A549 (cell line): ENCODE measurements at regions of chr17 and their contacts with region 1.

Region 1: DNA sequence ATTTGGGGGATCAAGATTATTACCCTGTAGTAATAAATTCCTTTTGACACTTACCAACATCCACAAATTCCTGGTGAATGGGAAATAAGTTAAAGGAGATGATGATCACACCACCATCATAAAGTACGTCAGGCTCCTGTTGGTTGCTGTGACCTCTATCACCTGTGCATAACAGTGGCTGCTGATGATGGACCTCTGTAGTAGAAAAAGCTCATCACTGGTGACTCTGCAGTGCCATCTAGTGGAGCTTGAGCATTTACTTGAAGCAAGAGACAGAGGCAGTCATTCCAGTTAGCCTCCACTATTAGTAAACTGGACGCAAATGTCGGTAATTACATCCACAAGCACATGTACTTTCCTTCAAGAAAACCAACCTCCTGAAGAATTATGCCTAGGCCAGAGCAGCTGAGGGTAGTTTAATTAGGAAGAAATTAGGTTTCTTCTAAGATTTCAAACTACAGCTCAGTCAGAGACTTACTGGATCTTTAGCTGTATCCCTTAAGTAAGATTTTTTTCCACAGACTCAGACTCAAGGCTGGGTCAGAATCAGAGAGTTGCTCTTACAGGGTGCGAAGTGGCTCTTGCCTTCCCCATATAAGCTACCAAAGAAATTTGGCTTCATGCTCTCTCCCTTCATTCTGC is 39.3 kb downstream of the CYB561 start:
- DNase-seq: peak; percentile 87 to 92
- ATAC-seq: peak; percentile 95 to 97
- H3K4me3 ChIP-seq: no peak overlapping the region
- H3K27ac ChIP-seq: no peak overlapping the region
- H3K4me1 ChIP-seq: no peaks in the 10 kb centered on the region
- CTCF ChIP-seq: peak; percentile 96
- EP300 ChIP-seq: no peak
- POLR2A ChIP-seq: no peak
- RAD21 ChIP-seq: peak; percentile 94 to 96

Region 2: GRCh38 chr17:62703775-62704378 is 702.9 kb before region 1 on chr17:
- CTCF ChIA-PET with region 1: interaction called, 13 read pairs
- POLR2A ChIA-PET with region 1: no interaction called
- DNase-seq: peak; percentile 64 to 74
- ATAC-seq: peak; percentile 86 to 93
- H3K4me3 ChIP-seq: peak overlapping the region; percentile 70
- H3K27ac ChIP-seq: peak overlapping the region; percentile 96 to 97
- H3K4me1 ChIP-seq: peaks cover 21% of the 10 kb centered on the region
- CTCF ChIP-seq: peak; percentile 99
- EP300 ChIP-seq: no peak; a peak in 1 of 5 replicates
- POLR2A ChIP-seq: no peak
- RAD21 ChIP-seq: peak; percentile 94 to 100

Region 3: GRCh38 chr17:62797959-62798358 is 608.9 kb before region 1 on chr17:
- CTCF ChIA-PET with region 1: no interaction called
- POLR2A ChIA-PET with region 1: no interaction called
- DNase-seq: no peak
- ATAC-seq: no peak
- H3K4me3 ChIP-seq: no peak overlapping the region
- H3K27ac ChIP-seq: peak overlapping the region; percentile 41 to 90
- H3K4me1 ChIP-seq: peaks cover 15% of the 10 kb centered on the region
- CTCF ChIP-seq: no peak
- EP300 ChIP-seq: no peak
- POLR2A ChIP-seq: no peak
- RAD21 ChIP-seq: no peak

Region 4: DNA sequence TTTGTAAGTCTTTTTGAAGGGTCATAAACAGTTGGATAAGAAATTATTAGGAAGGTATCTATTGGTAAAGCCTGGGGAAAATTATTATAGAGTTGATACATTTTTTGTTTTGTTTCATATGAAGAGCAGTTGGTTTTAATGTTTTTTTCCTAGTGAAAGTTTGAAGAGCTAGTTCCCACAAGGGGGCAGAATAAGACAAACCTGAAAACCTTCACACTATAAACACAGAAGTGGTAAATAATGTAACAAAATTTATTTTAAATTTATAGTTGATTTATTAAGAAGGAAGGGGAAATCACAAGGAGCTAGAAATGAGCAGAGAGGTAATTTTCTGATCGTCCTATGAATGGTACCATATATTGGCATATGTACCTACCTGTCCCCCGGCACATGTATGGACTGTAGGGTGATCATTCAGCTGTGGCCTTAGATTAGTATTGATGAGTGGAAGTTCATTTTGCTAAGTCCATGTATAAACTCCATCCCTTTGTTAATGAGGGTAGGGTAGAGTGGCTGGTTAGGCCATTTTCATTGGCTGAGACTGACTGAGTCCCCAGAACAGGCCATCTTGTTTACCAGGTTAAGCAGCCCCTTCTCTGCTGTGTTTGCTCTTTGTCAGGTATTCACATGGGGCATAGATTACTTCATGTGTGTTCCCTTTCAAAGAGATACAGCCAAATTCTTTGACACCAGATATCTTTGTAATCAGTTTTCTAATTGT is 324.4 kb before region 1 on chr17:
- CTCF ChIA-PET with region 1: interaction called, 18 read pairs
- POLR2A ChIA-PET with region 1: no interaction called
- DNase-seq: peak in 1 of 2 experiments; percentile 26
- ATAC-seq: peak; percentile 28 to 55; a peak in 3 of 6 replicates
- H3K4me3 ChIP-seq: no peak overlapping the region
- H3K27ac ChIP-seq: no peak overlapping the region
- H3K4me1 ChIP-seq: no peaks in the 10 kb centered on the region
- CTCF ChIP-seq: peak; percentile 64
- EP300 ChIP-seq: no peak
- POLR2A ChIP-seq: no peak
- RAD21 ChIP-seq: peak; percentile 62 to 63

Region 5: GRCh38 chr17:63364387-63364786 is 42.4 kb before region 1 on chr17:
- CTCF ChIA-PET with region 1: interaction called, 17 read pairs
- POLR2A ChIA-PET with region 1: no interaction called
- DNase-seq: no peak
- ATAC-seq: no peak
- H3K4me3 ChIP-seq: no peak overlapping the region
- H3K27ac ChIP-seq: no peak overlapping the region
- H3K4me1 ChIP-seq: no peaks in the 10 kb centered on the region
- CTCF ChIP-seq: no peak
- EP300 ChIP-seq: no peak
- POLR2A ChIP-seq: no peak
- RAD21 ChIP-seq: no peak

Region 6: DNA sequence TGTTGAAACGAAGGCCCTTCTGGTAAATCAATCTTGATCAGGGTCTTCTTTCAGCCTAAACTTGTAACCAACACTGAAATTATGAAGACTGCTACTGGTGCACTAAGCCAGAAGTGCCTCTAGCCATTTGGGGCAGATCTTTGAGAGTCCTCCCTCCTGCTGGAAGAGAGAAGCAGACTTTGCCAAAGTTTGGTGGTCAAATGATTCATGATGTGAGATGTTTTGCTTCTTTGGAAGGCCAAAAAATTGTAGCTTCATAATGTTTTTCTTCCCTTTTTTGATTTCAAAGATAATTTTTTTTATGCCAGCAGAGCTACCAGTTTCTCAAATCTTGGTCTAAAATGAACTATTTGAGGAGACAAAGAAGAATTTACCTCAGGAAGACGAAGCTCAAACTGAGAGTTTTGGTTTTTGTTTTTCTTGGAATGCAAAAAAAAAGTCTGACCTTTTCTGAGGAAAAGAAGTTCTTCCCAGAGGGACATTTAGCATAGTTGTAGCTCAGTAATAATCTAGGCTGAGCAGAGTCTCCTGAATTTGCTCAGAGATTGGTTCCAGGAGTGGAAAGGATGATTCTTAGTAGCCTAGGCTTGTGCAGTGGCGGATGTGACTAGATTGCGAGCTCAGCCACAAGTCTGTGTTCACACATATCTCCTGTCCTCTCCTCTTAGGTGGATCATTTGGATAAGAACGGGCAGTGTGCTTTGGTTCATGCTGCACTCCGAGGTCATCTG is 11.6 kb before region 1 on chr17:
- CTCF ChIA-PET with region 1: interaction called, 36 read pairs
- POLR2A ChIA-PET with region 1: no interaction called
- DNase-seq: no peak
- ATAC-seq: no peak
- H3K4me3 ChIP-seq: no peak overlapping the region
- H3K27ac ChIP-seq: no peak overlapping the region
- H3K4me1 ChIP-seq: no peaks in the 10 kb centered on the region
- CTCF ChIP-seq: no peak
- EP300 ChIP-seq: no peak
- POLR2A ChIP-seq: no peak
- RAD21 ChIP-seq: no peak

Region 7: GRCh38 chr17:63434876-63435684 is 28.3 kb after region 1 on chr17:
- CTCF ChIA-PET with region 1: interaction called, 38 read pairs
- POLR2A ChIA-PET with region 1: no interaction called
- DNase-seq: peak; percentile 62 to 76
- ATAC-seq: peak; percentile 25 to 45; a peak in 5 of 6 replicates
- H3K4me3 ChIP-seq: no peak overlapping the region
- H3K27ac ChIP-seq: peak overlapping the region; percentile 37 to 85
- H3K4me1 ChIP-seq: peaks cover 53% of the 10 kb centered on the region
- CTCF ChIP-seq: peak; percentile 23; the same call in 2 of the 3 replicates
- EP300 ChIP-seq: no peak
- POLR2A ChIP-seq: no peak
- RAD21 ChIP-seq: no peak; a peak in 1 of 5 replicates